Uterus (tissue), 4 donors: ENCODE measurements at regions of chr17 and their contacts with region 1.

Region 1: DNA sequence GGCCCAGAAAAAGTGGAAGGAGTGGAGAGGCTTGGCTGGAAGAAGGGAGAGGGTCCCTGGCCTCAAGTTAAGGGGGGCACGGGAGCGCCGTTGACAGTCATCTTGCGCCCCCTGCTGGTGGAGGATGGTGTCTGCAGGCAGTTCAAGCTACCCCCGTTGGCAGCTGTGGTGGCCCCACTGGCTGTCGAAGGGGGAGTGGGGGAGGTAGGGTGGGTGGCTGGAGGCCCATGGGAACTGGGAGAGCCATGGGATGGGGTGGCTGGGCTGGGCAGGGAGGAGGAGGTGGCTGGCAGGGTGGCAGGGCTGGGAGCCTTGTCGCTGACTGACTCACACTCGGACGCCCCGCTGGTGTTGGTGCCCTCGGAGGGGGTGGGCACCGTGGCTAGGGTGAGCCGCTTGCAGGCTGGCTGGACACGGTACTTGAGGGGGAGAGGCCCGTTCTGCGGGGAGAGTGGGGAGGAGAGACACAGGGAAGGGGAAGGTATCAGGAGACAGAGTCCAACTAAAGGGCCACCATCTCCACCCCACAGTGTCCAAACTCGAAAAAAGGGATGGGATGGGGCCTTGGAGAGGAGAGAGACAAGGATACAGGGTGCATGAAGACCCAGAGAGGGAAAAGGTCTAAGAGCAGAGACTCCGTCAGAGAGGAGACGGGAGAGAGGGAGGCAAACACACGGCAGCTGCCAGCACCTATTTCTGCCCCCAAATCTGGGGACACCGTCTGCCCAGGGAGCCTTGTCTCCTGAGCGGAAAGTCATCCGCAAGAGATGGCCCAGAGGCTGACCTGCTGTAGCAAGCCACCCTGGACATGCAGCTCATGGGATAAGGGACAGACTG is 5.2 kb downstream of the CISD3 start:
- DNase-seq: peak; percentile 62 to 69
- H3K4me3 ChIP-seq: no peak overlapping the region
- H3K27ac ChIP-seq: peak overlapping the region in 1 of 2 donors; percentile 13
- H3K4me1 ChIP-seq: no peaks in the 10 kb centered on the region
- H3K27me3 ChIP-seq: no peaks in the 10 kb centered on the region
- CTCF ChIP-seq: peak; percentile 87 to 98 (median 92)
- POLR2A ChIP-seq: no peak

Region 2: GRCh38 chr17:38674749-38675615 is 60.4 kb before region 1 on chr17 and contains the start of gene EPOP:
- intact Hi-C with region 1: loop called (anchors 5 kb)
- DNase-seq: peak; percentile 54 to 78
- H3K4me3 ChIP-seq: peak within 1 kb of the TSS; percentile 6 to 35
- H3K27ac ChIP-seq: no peak within 1 kb of the TSS
- H3K4me1 ChIP-seq: peaks cover 0 to 12% of the 10 kb centered on the region in 2 donors
- H3K27me3 ChIP-seq: peaks cover 0 to 35% of the 10 kb centered on the region in 2 donors
- CTCF ChIP-seq: no peak
- POLR2A ChIP-seq: peak; percentile 32 to 33
- total RNA-seq, gene EPOP: under 0.01 to 1.1 (median 1.0) TPM in 3 of 4 donors, not detected in the other